ENCODE measurements at regions of chrX and their contacts with region 1.

Region 1: GRCh38 chrX:136880452-136881013 is at the start of gene RBMX:
- DNase-seq: peak; percentile 93 to 97 (median 96)
- ATAC-seq: peak; percentile 84
- H3K4me3 ChIP-seq: peak within 1 kb of the TSS; percentile 91
- H3K27ac ChIP-seq: peak within 1 kb of the TSS; percentile 88
- H3K4me1 ChIP-seq: peaks cover 14 to 30% of the 10 kb centered on the region in 2 experiments
- H3K27me3 ChIP-seq: no peaks in the 10 kb centered on the region
- CTCF ChIP-seq: no peak
- EP300 ChIP-seq: peak; percentile 4; the same call in 1 of the 2 replicates
- POLR2A ChIP-seq: peak; percentile 100
- RAD21 ChIP-seq: peak in 1 of 2 experiments; percentile 18; a peak in 2 of 4 replicates
- polyA plus RNA-seq, gene RBMX: 468 to 638 TPM

Region 2: GRCh38 chrX:136797787-136798186 is 82.7 kb before region 1 on chrX:
- CTCF ChIA-PET with region 1: no interaction called
- POLR2A ChIA-PET with region 1: no interaction called
- in situ Hi-C with region 1: no loop called
- intact Hi-C with region 1: no loop called
- DNase-seq: no peak
- ATAC-seq: no peak
- H3K4me3 ChIP-seq: no peak overlapping the region
- H3K27ac ChIP-seq: no peak overlapping the region
- H3K4me1 ChIP-seq: no peaks in the 10 kb centered on the region
- H3K27me3 ChIP-seq: no peaks in the 10 kb centered on the region
- CTCF ChIP-seq: no peak
- EP300 ChIP-seq: no peak
- POLR2A ChIP-seq: no peak
- RAD21 ChIP-seq: no peak

Region 3: DNA sequence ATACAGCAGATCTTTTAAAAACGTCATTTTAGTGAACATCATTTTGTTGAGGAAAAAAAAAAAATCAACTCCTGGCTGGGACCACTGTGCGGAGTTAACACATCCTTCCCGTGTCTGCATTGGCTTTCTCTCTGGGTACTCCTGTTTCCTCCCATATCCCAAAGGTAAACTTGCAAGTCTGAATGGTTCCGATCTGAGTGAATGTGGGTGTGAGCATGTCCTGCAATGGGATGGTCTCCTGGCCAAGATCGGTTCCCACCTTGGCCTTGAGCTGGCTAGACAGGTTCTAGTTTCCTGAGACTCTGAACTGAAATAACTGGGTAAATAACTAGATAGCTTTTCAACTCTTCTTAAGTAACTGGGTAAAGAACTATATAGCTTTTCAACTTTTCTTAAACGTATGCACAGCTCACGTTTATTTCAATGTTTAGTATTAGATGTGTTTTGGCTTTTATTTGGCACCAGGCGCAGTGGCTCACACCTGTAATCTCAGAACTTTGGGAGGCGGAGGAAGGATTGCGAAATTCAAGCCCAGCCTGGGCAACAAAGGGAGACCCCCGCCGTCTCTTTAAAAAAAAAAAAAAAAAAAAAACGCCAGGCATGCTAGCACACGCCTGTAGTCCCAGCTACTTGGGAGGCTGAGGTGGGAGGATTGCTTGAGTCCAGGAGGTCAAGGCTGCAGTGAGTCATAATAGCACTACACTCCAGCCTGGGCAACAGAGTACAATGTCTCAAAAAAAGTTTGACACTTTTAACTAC is 14.0 kb before region 1 on chrX:
- CTCF ChIA-PET with region 1: no interaction called
- POLR2A ChIA-PET with region 1: interaction called, 43 read pairs
- in situ Hi-C with region 1: no loop called
- intact Hi-C with region 1: no loop called
- DNase-seq: no peak
- ATAC-seq: peak; percentile 43
- H3K4me3 ChIP-seq: no peak overlapping the region
- H3K27ac ChIP-seq: peak overlapping the region; percentile 33; the same call in 1 of the 3 replicates
- H3K4me1 ChIP-seq: no peaks in the 10 kb centered on the region; a peak in 1 of 5 replicates
- H3K27me3 ChIP-seq: no peaks in the 10 kb centered on the region
- CTCF ChIP-seq: no peak
- EP300 ChIP-seq: no peak
- POLR2A ChIP-seq: 0 out of 2 replicates have a peak, but pooled peaks have one; percentile 51
- RAD21 ChIP-seq: no peak

Region 4: GRCh38 chrX:136896121-136896914 is 15.8 kb after region 1 on chrX:
- CTCF ChIA-PET with region 1: no interaction called
- POLR2A ChIA-PET with region 1: interaction called, 32 read pairs
- in situ Hi-C with region 1: no loop called
- intact Hi-C with region 1: no loop called
- DNase-seq: peak; percentile 23 to 81 (median 42)
- ATAC-seq: peak; percentile 81
- H3K4me3 ChIP-seq: no peak overlapping the region
- H3K27ac ChIP-seq: peak overlapping the region; percentile 77
- H3K4me1 ChIP-seq: peaks cover 14 to 49% of the 10 kb centered on the region in 2 experiments
- H3K27me3 ChIP-seq: no peaks in the 10 kb centered on the region
- CTCF ChIP-seq: no peak
- EP300 ChIP-seq: peak; percentile 54; the same call in 1 of the 2 replicates
- POLR2A ChIP-seq: no peak
- RAD21 ChIP-seq: no peak

Region 5: DNA sequence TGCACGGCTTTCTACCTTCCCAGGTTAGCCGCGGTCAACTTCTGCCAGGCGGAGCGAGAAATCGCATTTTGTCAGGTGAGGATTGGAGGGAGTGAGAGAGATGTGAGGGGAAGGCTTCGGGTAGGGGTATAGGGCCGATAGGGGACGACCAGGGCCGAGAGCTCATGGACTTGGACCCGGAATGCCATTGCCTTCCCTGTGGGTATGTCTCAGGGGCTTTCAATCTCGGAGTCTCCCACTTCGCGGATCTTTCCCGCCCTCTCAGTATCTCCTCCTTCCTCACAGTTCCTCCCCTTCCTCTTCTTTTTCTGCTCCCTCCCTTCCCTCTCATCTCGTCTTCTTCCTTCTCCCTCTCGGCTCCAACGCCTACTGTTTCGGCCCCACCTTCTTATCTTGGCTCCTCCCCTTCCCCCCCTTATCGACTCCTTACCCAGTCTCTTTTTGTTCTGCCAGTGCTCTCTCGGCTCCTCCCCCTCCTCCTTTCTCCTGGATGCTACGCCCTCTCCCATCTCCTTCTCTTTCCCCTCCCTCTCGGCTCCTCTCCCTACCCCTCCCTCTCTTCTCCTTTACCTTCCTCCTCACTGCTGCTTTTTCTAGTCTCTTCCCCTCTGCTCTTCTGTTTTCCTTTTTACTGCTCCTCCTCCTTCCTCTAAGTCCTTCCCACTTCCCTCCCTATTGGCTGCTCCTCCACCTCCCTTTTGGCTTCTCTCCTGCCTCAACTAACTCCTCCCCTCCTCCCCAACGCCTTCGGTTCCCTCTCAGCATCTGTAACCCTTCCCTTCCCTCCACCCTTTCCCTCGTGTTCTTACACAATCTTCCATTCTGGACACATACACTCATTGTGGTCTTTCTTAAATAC is 29.4 kb after region 1 on chrX:
- CTCF ChIA-PET with region 1: no interaction called
- POLR2A ChIA-PET with region 1: interaction called, 24 read pairs
- in situ Hi-C with region 1: no loop called
- intact Hi-C with region 1: loop called (anchors 1 kb)
- DNase-seq: peak; percentile 80 to 96 (median 88)
- ATAC-seq: peak; percentile 85
- H3K4me3 ChIP-seq: peak overlapping the region; percentile 58
- H3K27ac ChIP-seq: peak overlapping the region; percentile 82
- H3K4me1 ChIP-seq: peaks cover 12 to 15% of the 10 kb centered on the region in 2 experiments
- H3K27me3 ChIP-seq: no peaks in the 10 kb centered on the region
- CTCF ChIP-seq: no peak
- EP300 ChIP-seq: no peak
- POLR2A ChIP-seq: peak; percentile 89
- RAD21 ChIP-seq: 0 out of 4 replicates have a peak, but pooled peaks of 1 of the 2 experiments have one; percentile 2

Region 6: DNA sequence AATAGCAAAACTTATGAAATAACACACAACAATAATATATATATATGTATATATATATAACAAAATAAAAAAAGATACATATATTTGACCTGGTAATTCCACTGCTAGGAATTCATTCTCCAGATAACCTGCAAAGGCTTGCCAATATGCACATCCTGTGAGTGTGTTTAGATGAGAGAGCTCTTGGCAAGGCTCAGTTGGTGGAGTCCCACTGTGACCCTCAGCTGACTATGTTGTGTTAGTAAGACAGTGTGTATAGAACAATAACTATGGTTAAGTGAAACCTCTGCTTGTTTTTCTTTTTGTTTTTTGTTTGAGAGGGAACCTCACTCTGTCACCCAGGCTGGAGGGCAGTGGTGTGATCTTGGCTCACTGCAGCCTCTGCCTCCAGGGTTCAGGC is 39.5 kb after region 1 on chrX:
- CTCF ChIA-PET with region 1: no interaction called
- POLR2A ChIA-PET with region 1: interaction called, 10 read pairs
- in situ Hi-C with region 1: loop called (anchors 5 kb)
- intact Hi-C with region 1: no loop called
- DNase-seq: no peak
- ATAC-seq: no peak
- H3K4me3 ChIP-seq: no peak overlapping the region
- H3K27ac ChIP-seq: no peak overlapping the region; the same call in 2 of the 3 replicates
- H3K4me1 ChIP-seq: no peaks in the 10 kb centered on the region; a peak in 1 of 5 replicates
- H3K27me3 ChIP-seq: no peaks in the 10 kb centered on the region
- CTCF ChIP-seq: no peak
- EP300 ChIP-seq: no peak
- POLR2A ChIP-seq: no peak
- RAD21 ChIP-seq: no peak